ENCODE measurements at regions of chr15 and their contacts with region 1.

Region 1: GRCh38 chr15:84826369-84826823 is 9.2 kb downstream of the ALPK3 start:
- DNase-seq: peak; percentile 47
- H3K4me3 ChIP-seq: no peak overlapping the region
- H3K27ac ChIP-seq: no peak overlapping the region
- H3K4me1 ChIP-seq: no peaks in the 10 kb centered on the region
- CTCF ChIP-seq: peak; percentile 75

Region 2: DNA sequence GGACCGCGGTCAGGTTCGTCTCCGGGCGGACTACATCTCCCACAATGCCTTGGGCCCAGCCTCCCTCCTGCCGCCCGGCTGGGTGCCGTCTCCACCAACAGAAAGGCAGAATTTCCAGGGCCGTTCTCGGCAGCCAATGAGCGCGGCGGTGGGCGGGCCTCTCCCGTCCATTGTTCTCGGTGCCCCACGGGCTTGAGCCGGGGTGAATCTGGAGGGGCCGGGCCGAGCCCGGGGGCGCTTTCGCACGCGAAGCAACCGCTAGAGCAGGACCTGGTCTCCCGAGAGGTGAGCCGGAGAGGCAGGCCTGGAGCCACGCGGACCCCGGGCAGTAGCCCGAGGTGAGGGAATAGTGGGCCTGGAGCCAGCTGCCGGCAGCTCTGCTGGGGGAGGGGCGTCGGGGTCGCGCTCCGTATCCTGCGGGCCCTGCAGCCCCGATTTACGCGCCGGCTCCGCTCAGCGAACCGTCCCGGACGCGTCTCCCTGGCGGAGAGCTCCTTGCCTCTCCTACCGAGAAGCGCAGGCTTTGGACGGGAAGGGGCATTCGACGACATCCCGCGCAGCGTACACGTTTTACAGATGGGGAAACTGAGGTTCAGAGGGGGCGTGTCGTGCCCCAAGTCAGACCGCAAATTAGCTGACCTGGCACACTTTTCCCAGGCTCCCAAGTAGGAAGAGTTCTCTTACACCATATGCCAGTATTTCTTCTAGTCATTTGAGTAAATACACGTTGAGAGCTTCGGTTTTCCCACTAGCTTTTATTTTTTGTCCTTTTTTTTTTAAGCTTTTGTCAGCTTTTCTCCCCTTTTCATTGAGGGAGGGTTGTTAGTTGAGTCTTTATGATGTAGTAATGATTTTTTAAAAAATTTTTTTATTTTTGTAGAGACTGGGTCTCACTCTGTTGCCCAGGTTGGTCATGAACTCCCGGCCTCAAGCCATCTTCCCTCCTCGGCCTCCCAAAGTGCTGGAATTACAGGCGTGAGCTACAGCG is 225.3 kb before region 1 on chr15 and contains the start of gene ZSCAN2:
- CTCF ChIA-PET with region 1: no interaction called
- POLR2A ChIA-PET with region 1: interaction called, 3 read pairs
- intact Hi-C with region 1: loop called (anchors 5 kb)
- DNase-seq: peak; percentile 93
- H3K4me3 ChIP-seq: peak within 1 kb of the TSS; percentile 83
- H3K27ac ChIP-seq: no peak within 1 kb of the TSS
- H3K4me1 ChIP-seq: peaks cover 47% of the 10 kb centered on the region
- CTCF ChIP-seq: no peak
- total RNA-seq, gene ZSCAN2: 12.4 and 21.7 TPM in 2 replicates

Region 3: GRCh38 chr15:84785053-84785452 is 41.3 kb before region 1 on chr15:
- CTCF ChIA-PET with region 1: no interaction called
- POLR2A ChIA-PET with region 1: no interaction called
- intact Hi-C with region 1: loop called (anchors 5 kb)
- DNase-seq: no peak
- H3K4me3 ChIP-seq: no peak overlapping the region
- H3K27ac ChIP-seq: no peak overlapping the region
- H3K4me1 ChIP-seq: no peaks in the 10 kb centered on the region
- CTCF ChIP-seq: no peak

Region 4: GRCh38 chr15:84874981-84875699 is 48.7 kb after region 1 on chr15:
- CTCF ChIA-PET with region 1: no interaction called
- POLR2A ChIA-PET with region 1: no interaction called
- intact Hi-C with region 1: loop called (anchors 5 kb)
- DNase-seq: no peak
- H3K4me3 ChIP-seq: no peak overlapping the region
- H3K27ac ChIP-seq: no peak overlapping the region
- H3K4me1 ChIP-seq: no peaks in the 10 kb centered on the region
- CTCF ChIP-seq: no peak

Measured in OCI-LY7 (cell line).